ENCODE measurements at regions of chr9 and their contacts with region 1.

Region 1: GRCh38 chr9:129610473-129611301 is 10.2 kb downstream of the C9orf50 start:
- DNase-seq: peak; percentile 87 to 94
- ATAC-seq: peak; percentile 73
- H3K4me3 ChIP-seq: peak overlapping the region; percentile 14 to 46
- H3K27ac ChIP-seq: peak overlapping the region in 1 of 2 donors; percentile 72
- H3K4me1 ChIP-seq: no peaks in the 10 kb centered on the region
- H3K27me3 ChIP-seq: no peaks in the 10 kb centered on the region

Region 2: GRCh38 chr9:129131300-129132145 is 479.2 kb before region 1 on chr9:
- intact Hi-C with region 1: loop called in 1 of 2 experiments (anchors 2 kb)
- DNase-seq: peak; percentile 84 to 93
- ATAC-seq: peak; percentile 92
- H3K4me3 ChIP-seq: no peak overlapping the region
- H3K27ac ChIP-seq: peak overlapping the region in 1 of 2 donors; percentile 38
- H3K4me1 ChIP-seq: no peaks in the 10 kb centered on the region
- H3K27me3 ChIP-seq: no peaks in the 10 kb centered on the region

Region 3: GRCh38 chr9:129139993-129140396 is 470.7 kb before region 1 on chr9:
- intact Hi-C with region 1: loop called (anchors 1 to 2 kb)
- DNase-seq: peak; percentile 96
- ATAC-seq: peak; percentile 89
- H3K4me3 ChIP-seq: no peak overlapping the region
- H3K27ac ChIP-seq: peak overlapping the region; percentile 99 to 100
- H3K4me1 ChIP-seq: peaks cover 0 to 4% of the 10 kb centered on the region in 2 donors
- H3K27me3 ChIP-seq: no peaks in the 10 kb centered on the region

Region 4: GRCh38 chr9:129333953-129334724 is 276.5 kb before region 1 on chr9:
- intact Hi-C with region 1: loop called (anchors 5 to 10 kb)
- DNase-seq: peak; percentile 96 to 98
- ATAC-seq: peak; percentile 93
- H3K4me3 ChIP-seq: no peak overlapping the region
- H3K27ac ChIP-seq: peak overlapping the region; percentile 46 to 99
- H3K4me1 ChIP-seq: no peaks in the 10 kb centered on the region
- H3K27me3 ChIP-seq: no peaks in the 10 kb centered on the region

Region 5: DNA sequence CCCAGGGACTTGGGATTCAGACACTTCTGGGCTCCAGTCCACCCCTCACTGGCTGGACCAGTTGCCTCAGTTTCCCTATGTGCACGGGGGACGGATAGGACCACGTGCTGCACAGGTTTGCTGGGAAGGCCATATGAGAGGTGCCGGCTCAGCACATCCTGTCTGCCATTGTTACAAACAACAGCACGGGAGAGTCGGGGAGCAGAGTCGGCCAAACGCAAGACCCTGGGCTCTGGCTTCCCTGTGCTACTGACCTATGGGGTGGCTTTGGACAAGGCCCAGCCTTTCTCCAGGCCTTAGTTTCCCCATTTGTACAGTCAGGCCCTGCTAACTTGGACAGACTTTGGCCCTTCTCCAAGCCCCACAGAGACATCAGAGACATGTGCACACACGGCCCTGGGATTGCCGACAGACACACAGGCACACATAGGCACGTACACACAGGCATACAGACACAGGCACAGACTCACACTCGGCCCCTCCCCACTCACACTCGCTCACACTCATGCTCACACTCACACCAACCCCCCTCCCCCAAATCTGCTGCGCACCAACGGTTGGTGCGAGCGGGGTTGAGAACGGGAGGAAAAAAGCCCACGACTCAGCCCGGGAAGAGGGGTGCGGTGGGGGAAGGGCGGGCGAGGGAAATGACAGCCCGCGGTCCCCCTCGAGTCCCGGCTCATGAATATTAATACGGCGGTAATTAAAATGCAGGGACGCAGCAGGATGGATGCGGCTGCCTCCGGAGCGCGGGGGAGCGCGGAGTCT is 122.9 kb before region 1 on chr9:
- intact Hi-C with region 1: loop called in 1 of 2 experiments (anchors 2 kb)
- DNase-seq: peak; percentile 82 to 85
- ATAC-seq: peak; percentile 24
- H3K4me3 ChIP-seq: no peak overlapping the region
- H3K27ac ChIP-seq: peak overlapping the region; percentile 95 to 99
- H3K4me1 ChIP-seq: no peaks in the 10 kb centered on the region
- H3K27me3 ChIP-seq: no peaks in the 10 kb centered on the region

Region 6: DNA sequence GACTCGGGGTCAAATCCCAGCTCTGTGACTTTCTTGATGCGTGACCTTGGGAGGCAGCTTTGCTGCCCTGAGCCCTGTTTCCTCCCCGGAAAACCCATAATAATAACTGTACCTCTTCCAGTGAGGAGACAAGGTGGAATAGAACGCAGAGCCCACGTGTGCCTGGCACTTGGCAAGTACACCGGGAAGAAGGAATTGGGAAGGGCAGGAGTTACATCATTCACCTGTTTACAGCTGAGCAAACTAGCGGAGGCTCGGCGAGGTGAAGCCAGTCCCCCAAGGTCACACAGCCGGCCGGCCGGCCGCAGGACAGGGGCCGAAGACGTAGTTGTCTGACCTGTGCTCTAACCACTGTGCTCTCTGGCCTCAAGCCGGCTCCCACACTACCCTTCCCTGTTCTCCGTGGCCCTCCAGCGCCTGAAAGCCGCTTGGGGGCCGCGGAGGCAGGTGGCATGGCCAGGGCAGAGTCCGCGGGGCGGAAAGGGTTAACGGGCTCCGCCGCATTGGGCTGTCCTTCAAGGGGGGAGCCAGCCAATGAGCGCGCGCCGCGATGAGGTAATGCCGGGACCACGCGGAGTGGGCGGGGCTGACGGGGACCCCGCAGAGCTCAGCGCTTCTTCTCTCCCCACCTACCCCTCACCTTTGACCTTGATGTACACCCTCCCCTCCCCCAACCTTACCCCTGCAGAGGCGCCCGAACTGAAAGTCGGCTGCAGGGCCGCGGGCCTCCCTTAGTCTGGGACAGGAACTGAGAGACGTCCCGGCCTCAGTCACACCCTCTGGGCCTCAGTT is 115.0 kb before region 1 on chr9:
- intact Hi-C with region 1: loop called in 1 of 2 experiments (anchors 5 kb)
- DNase-seq: peak; percentile 96 to 98
- ATAC-seq: peak; percentile 90
- H3K4me3 ChIP-seq: peak overlapping the region; percentile 10 to 55
- H3K27ac ChIP-seq: peak overlapping the region; percentile 65 to 87
- H3K4me1 ChIP-seq: no peaks in the 10 kb centered on the region
- H3K27me3 ChIP-seq: no peaks in the 10 kb centered on the region

Region 7: DNA sequence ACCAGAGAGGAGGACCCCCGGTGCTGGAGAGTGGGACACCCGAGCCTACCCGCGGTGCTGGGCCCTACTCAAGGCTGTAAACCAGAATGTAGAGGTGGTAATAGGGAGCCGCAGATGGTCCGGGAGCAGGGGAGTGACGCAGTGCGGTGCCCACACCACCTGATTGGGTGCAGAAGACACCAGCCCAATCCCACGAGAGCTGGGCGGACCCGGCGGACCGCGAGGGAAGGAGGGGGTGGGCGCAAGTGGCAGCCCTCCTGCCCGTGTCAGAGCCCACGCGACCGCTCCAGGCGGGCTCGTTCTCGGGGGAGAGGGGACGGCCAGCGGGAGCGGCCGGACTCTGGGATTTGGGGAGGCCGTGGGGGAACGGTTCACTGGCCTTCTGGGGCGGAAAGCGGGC is 61.0 kb before region 1 on chr9:
- intact Hi-C with region 1: loop called in 1 of 2 experiments (anchors 10 kb)
- DNase-seq: peak; percentile 75 to 86
- ATAC-seq: peak; percentile 57
- H3K4me3 ChIP-seq: peak overlapping the region; percentile 28 to 35
- H3K27ac ChIP-seq: peak overlapping the region in 1 of 2 donors; percentile 95
- H3K4me1 ChIP-seq: no peaks in the 10 kb centered on the region
- H3K27me3 ChIP-seq: no peaks in the 10 kb centered on the region

Region 8: DNA sequence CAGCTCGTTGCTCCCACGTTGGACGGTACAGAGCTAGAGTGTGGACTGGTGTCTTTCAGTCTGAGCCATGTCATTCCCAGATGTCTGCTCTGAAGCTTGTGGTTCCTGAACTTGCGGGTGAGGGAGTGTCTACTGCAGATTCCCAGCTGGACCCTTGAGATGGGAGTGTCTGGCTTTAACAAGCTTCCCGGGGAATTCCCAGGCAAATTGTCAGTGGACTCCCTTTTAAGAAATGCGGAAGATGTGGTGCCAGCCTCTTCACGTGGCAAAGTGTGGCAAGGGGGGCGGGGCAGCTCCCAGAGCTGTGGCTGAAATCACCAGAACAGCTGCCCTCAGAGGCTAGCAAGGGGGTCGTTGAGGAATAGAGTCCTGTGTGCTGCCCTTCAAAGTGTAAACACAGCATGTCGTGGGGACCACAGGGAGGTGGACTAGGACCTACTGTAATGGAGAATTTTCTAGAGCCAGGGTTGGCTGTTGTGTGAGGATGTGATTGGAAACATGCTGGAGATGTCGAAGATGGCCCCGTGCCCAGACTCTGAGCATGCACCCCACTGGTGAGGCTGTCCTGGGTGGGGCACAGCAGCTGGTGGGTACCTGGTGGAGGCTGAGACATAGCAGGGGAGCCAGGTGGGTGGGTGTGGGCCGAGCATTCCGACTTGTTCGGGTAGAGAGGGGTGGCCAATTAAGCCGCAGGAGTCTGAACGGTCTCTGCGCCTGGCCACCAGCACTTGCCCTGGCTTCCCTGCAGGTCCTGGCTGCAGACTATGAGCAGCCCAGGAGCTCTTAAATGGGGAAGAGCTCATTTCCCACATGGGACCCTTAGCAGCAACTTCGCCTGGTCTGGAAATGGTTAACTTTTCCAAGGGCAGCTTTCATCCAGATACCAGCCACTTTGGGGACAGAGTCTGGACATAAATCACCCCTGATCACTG is 92.2 kb after region 1 on chr9:
- intact Hi-C with region 1: no loop called
- DNase-seq: peak; percentile 75 to 86
- ATAC-seq: peak; percentile 20
- H3K4me3 ChIP-seq: no peak overlapping the region
- H3K27ac ChIP-seq: peak overlapping the region; percentile 79 to 98
- H3K4me1 ChIP-seq: peaks cover 0 to 7% of the 10 kb centered on the region in 2 donors
- H3K27me3 ChIP-seq: no peaks in the 10 kb centered on the region